ENCODE measurements at regions of chr18 and their contacts with region 1.

Region 1: DNA sequence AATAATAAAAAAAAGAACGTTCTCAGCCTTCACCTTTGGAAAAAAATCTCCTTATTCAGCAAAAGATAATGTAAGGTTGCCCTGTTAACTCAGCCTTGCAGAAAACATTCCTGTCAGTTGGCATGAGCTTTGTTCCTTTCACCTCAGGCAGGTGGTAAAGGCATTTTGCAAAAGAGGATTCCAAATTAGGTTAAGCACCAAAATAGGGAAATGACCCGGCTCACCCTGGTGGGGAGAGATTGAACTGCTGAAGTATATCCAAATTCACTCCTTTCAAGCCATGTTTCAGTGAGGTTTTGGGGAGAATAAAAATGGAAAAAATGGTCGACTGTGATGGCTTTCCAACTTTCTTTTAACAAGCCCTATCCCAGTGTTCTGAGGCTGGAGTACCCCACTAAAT is 1988.8 kb upstream of the PIK3C3 start:
- DNase-seq: no peak
- ATAC-seq: no peak
- H3K4me3 ChIP-seq: no peak overlapping the region
- H3K27ac ChIP-seq: no peak overlapping the region
- H3K4me1 ChIP-seq: no peaks in the 10 kb centered on the region
- H3K27me3 ChIP-seq: no peaks in the 10 kb centered on the region
- CTCF ChIP-seq: no peak

Region 2: GRCh38 chr18:39788383-39788782 is 177.9 kb before region 1 on chr18:
- CTCF ChIA-PET with region 1: no interaction called
- POLR2A ChIA-PET with region 1: interaction called, 10 read pairs
- in situ Hi-C with region 1: no loop called
- intact Hi-C with region 1: no loop called
- DNase-seq: no peak
- ATAC-seq: no peak
- H3K4me3 ChIP-seq: no peak overlapping the region
- H3K27ac ChIP-seq: no peak overlapping the region
- H3K4me1 ChIP-seq: no peaks in the 10 kb centered on the region
- H3K27me3 ChIP-seq: no peaks in the 10 kb centered on the region
- CTCF ChIP-seq: no peak

Region 3: DNA sequence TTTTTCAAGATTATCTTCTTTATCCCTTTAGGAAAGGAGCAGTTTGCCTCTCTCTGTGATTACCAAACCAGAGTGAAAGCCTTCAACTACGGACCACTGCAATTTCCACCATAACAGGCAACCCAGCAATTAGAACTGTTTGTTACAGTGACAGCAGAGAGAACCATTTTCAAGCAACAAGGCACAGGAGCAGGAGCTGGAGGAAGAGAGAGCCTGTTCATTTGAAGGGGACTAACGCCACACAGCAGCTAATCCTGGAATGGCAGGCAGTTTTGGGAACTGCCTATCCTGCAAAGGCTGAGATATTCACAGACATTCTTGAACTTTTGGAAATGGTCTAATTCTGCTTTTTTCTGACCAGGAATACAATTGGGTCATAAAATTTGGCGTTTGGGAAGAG is 446.9 kb after region 1 on chr18:
- CTCF ChIA-PET with region 1: no interaction called
- POLR2A ChIA-PET with region 1: no interaction called
- in situ Hi-C with region 1: no loop called
- intact Hi-C with region 1: no loop called
- DNase-seq: no peak
- ATAC-seq: no peak
- H3K4me3 ChIP-seq: no peak overlapping the region
- H3K27ac ChIP-seq: no peak overlapping the region
- H3K4me1 ChIP-seq: no peaks in the 10 kb centered on the region
- H3K27me3 ChIP-seq: no peaks in the 10 kb centered on the region
- CTCF ChIP-seq: peak; percentile 16; the same call in 1 of the 2 replicates